PC-3 (cell line): ENCODE measurements at regions of chr7 and their contacts with region 1.

Region 1: DNA sequence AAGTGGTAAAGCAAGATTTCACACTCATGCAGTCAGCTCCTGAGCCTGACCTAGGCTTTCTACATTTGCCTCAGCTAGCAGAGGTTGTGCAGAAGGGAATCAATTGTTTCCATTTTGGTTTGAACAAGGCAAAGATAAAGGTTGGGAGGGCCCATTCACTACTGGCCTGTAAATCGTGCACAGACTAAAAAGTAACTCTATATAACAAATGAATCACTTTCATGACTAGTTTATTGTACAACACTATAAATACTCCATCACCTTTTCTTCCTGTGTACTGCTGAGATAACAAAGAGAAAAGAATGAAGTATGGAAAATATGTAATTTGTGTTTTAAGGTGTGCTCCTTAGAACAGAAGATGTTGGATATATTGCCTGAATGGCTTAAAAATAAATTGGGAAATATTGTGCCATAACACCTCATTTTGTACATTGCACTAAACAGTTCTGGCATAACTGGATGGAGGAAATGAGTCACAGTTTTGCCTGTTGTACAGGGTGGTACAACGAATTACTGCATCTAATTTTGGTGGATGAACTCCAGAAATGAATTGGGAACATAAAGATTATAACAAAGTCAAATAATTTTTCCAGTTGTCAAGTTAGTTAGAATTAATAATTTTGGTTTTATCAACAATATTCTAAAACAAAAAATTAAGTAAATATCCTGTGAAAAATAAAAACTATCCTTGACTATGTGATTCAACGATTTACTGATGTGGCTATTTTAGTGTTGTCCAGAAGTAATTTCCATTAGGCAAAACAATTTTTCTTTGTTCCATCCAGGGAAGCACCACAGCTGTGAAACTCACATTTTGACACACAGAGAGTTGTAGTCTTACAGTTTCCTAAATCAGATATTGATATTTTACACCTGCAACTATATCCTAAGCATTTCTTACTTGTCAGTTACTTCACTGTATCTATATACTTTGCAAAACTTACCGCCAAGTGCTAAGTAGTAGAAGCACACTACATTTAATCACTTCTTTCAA is 18.0 kb downstream of the SEMA3C start:
- DNase-seq: peak; percentile 65
- ATAC-seq: peak; percentile 81
- H3K4me3 ChIP-seq: no peak overlapping the region
- H3K27ac ChIP-seq: peak overlapping the region; percentile 63
- H3K4me1 ChIP-seq: peaks cover 56% of the 10 kb centered on the region
- H3K27me3 ChIP-seq: no peaks in the 10 kb centered on the region
- CTCF ChIP-seq: no peak

Region 2: GRCh38 chr7:80781561-80781979 is 119.3 kb before region 1 on chr7:
- CTCF ChIA-PET with region 1: no interaction called
- POLR2A ChIA-PET with region 1: no interaction called
- intact Hi-C with region 1: loop called (anchors 5 kb)
- DNase-seq: peak; percentile 93
- ATAC-seq: peak; percentile 55
- H3K4me3 ChIP-seq: no peak overlapping the region
- H3K27ac ChIP-seq: peak overlapping the region; percentile 18
- H3K4me1 ChIP-seq: peaks cover 56% of the 10 kb centered on the region
- H3K27me3 ChIP-seq: no peaks in the 10 kb centered on the region
- CTCF ChIP-seq: no peak

Region 3: DNA sequence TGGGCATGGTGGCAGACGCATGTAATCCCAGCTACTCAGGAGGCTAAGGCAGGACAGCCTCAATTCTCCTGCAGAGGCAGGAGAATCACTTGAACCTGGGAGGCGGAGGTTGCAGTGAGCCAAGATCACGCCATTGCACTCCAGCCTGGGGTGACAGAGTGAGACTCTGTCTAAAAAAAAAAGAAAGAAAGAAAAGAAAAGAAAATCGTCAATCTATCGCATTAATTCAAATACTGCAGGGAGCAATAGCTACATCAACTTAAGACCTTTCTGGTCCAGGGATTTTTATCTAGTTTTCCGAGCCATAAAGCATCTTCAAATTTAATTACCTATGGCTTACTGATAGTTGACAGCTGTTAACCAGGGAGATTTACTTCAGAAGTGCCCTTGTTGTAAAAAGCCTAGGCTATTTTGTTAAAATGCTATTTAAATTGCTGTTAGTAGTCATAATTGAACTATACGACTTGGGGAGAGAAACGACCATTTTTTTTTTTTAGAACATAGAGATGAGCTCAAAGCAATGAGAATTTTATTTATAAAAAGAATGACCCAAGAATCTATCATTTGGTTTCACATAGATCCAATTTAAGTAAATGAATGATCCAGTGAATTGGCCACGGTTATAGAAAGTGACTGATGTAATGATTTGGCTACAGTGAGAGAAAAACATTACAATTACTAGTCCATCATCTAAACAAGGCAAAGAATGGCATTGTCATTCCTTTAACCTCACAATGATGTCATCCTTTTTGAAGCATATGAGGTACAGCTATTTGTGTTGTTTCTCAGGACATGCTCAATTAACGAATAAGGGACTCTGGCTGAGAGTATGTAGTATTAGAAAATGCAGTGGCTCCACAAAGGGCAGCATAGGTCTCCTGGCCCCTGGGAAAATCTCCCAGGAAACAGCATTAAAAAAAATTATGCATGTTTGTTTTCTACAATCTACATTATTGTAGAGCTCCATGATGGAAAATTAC is 67.3 kb before region 1 on chr7:
- CTCF ChIA-PET with region 1: no interaction called
- POLR2A ChIA-PET with region 1: no interaction called
- intact Hi-C with region 1: loop called (anchors 5 kb)
- DNase-seq: no peak
- ATAC-seq: no peak
- H3K4me3 ChIP-seq: no peak overlapping the region
- H3K27ac ChIP-seq: no peak overlapping the region
- H3K4me1 ChIP-seq: peaks cover 28% of the 10 kb centered on the region
- H3K27me3 ChIP-seq: no peaks in the 10 kb centered on the region
- CTCF ChIP-seq: no peak